CD8-positive, alpha-beta T cell (primary cell): ENCODE measurements at regions of chrX and their contacts with region 1.

Region 1: DNA sequence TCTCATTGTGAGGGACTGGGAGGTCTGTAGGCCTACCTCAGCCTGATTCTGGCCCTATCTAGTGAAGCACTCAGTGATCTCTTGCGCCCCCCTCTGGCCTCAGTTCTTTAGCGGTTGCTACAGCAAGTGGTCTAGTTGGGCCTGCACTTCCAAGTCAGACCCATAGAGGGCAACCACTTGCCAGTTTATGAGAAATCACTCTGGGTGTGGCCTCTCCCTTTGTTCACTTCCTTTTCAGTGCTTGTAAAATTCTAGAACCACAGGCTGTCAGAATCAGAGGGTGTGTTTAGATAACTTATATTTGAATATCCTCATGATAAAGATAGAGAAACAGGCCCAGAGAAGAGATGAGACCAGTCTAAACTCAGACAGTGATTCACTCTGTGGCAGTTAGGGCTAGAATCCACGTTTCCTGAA is 60.9 kb upstream of the LAS1L start:
- DNase-seq: peak; percentile 82 to 96 (median 92)
- ATAC-seq: peak; percentile 81
- H3K4me3 ChIP-seq: peak overlapping the region in 1 of 2 experiments; percentile 17
- H3K4me3 Mint-ChIP-seq: peak overlapping the region; percentile 67
- H3K27ac ChIP-seq: peak overlapping the region; percentile 64 to 90
- H3K27ac Mint-ChIP-seq: peak overlapping the region; percentile 96
- H3K4me1 ChIP-seq: peaks cover 51% of the 10 kb centered on the region
- H3K4me1 Mint-ChIP-seq: peaks cover 48% of the 10 kb centered on the region
- H3K27me3 ChIP-seq: no peaks in the 10 kb centered on the region
- H3K27me3 Mint-ChIP-seq: no peaks in the 10 kb centered on the region
- CTCF ChIP-seq: peak; percentile 82

Region 2: DNA sequence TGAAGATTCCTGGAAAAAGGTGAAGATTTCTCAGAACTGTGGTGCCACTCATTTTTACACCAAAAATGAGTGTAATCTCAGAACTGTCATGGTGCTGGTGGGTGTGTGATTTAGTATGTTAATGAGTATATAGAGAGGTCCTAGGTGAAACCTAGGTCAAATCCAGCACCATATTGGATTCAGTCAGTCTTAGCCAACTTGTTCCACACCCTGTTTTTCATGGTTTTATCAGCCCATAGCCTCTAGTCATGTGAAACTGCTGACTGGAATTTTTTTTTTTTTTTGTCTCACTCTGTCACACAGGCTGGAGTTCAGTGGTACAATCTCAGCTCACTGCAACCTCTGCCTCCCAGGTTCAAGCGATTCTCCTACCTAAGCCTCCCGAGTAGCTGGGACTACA is 118.9 kb before region 1 on chrX:
- CTCF ChIA-PET with region 1: no interaction called
- POLR2A ChIA-PET with region 1: no interaction called
- intact Hi-C with region 1: no loop called
- DNase-seq: no peak
- ATAC-seq: no peak
- H3K4me3 ChIP-seq: no peak overlapping the region
- H3K4me3 Mint-ChIP-seq: no peak overlapping the region
- H3K27ac ChIP-seq: no peak overlapping the region
- H3K27ac Mint-ChIP-seq: no peak overlapping the region
- H3K4me1 ChIP-seq: no peaks in the 10 kb centered on the region
- H3K4me1 Mint-ChIP-seq: no peaks in the 10 kb centered on the region
- H3K27me3 ChIP-seq: no peaks in the 10 kb centered on the region
- H3K27me3 Mint-ChIP-seq: no peaks in the 10 kb centered on the region
- CTCF ChIP-seq: no peak

Region 3: DNA sequence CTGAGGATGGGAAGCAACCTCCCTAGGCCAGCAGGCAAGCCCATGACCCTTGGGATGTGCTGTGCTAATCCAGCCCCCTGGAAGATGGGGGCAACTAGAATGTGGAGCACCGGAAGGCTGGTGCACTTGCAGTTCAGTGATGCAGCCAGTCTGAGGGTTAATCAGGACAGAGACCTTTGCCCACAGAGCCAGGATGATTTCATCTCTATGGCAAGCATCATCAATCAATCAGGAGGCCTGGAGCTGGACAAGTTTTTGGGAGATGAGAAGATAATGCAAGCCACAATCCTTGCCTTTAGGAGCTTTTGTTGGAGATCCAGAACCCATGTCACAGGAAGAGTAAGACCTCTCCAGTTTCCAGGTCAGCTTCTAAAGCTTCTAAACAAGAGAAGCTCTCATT is 56.6 kb after region 1 on chrX:
- CTCF ChIA-PET with region 1: interaction called, 3 read pairs
- POLR2A ChIA-PET with region 1: no interaction called
- intact Hi-C with region 1: loop called in 1 of 2 experiments (anchors 5 kb)
- DNase-seq: no peak
- ATAC-seq: no peak
- H3K4me3 ChIP-seq: no peak overlapping the region
- H3K4me3 Mint-ChIP-seq: no peak overlapping the region
- H3K27ac ChIP-seq: no peak overlapping the region
- H3K27ac Mint-ChIP-seq: no peak overlapping the region
- H3K4me1 ChIP-seq: no peaks in the 10 kb centered on the region
- H3K4me1 Mint-ChIP-seq: peaks cover 15% of the 10 kb centered on the region
- H3K27me3 ChIP-seq: no peaks in the 10 kb centered on the region
- H3K27me3 Mint-ChIP-seq: no peaks in the 10 kb centered on the region
- CTCF ChIP-seq: no peak

Region 4: GRCh38 chrX:65677954-65678469 is 82.5 kb after region 1 on chrX:
- CTCF ChIA-PET with region 1: interaction called, 11 read pairs
- POLR2A ChIA-PET with region 1: no interaction called
- intact Hi-C with region 1: no loop called
- DNase-seq: no peak
- ATAC-seq: no peak
- H3K4me3 ChIP-seq: no peak overlapping the region
- H3K4me3 Mint-ChIP-seq: peak overlapping the region; percentile 58
- H3K27ac ChIP-seq: peak overlapping the region in 1 of 2 experiments; percentile 54
- H3K27ac Mint-ChIP-seq: peak overlapping the region; percentile 77
- H3K4me1 ChIP-seq: peaks cover 85% of the 10 kb centered on the region
- H3K4me1 Mint-ChIP-seq: peaks cover 83% of the 10 kb centered on the region
- H3K27me3 ChIP-seq: no peaks in the 10 kb centered on the region
- H3K27me3 Mint-ChIP-seq: no peaks in the 10 kb centered on the region
- CTCF ChIP-seq: no peak

Region 5: GRCh38 chrX:65712005-65712806 is 116.7 kb after region 1 on chrX:
- CTCF ChIA-PET with region 1: no interaction called
- POLR2A ChIA-PET with region 1: no interaction called
- intact Hi-C with region 1: no loop called
- DNase-seq: no peak
- ATAC-seq: no peak
- H3K4me3 ChIP-seq: no peak overlapping the region
- H3K4me3 Mint-ChIP-seq: no peak overlapping the region
- H3K27ac ChIP-seq: peak overlapping the region in 1 of 2 experiments; percentile 21
- H3K27ac Mint-ChIP-seq: peak overlapping the region; percentile 55
- H3K4me1 ChIP-seq: peaks cover 63% of the 10 kb centered on the region
- H3K4me1 Mint-ChIP-seq: peaks cover 71% of the 10 kb centered on the region
- H3K27me3 ChIP-seq: no peaks in the 10 kb centered on the region
- H3K27me3 Mint-ChIP-seq: no peaks in the 10 kb centered on the region
- CTCF ChIP-seq: no peak

Region 6: DNA sequence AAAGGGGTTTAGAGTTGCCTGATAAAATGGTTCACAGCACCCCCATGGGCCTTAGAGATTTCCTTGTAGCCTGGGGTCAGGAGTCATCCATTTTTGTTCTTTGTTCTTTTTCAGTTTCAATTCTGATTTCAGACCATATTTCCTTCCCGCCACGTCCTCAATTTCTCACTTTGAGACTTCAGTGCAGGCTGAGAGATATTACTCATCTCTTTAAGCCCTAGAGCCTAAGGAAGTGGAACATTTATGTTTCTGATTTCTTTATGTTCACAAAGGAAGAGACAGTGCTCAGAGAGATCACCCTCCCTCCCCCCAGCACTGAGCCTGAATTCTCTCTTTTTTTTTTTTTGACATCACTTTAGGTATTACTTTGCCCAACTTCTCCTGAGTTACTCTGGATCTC is 128.2 kb after region 1 on chrX:
- CTCF ChIA-PET with region 1: interaction called, 4 read pairs
- POLR2A ChIA-PET with region 1: no interaction called
- intact Hi-C with region 1: loop called (anchors 1 to 2 kb)
- DNase-seq: peak in 5 of 9 experiments; percentile 13 to 81 (median 53)
- ATAC-seq: peak; percentile 68
- H3K4me3 ChIP-seq: no peak overlapping the region
- H3K4me3 Mint-ChIP-seq: peak overlapping the region; percentile 45
- H3K27ac ChIP-seq: peak overlapping the region; percentile 58 to 83
- H3K27ac Mint-ChIP-seq: peak overlapping the region; percentile 91
- H3K4me1 ChIP-seq: peaks cover 86% of the 10 kb centered on the region
- H3K4me1 Mint-ChIP-seq: peaks cover 84% of the 10 kb centered on the region
- H3K27me3 ChIP-seq: no peaks in the 10 kb centered on the region
- H3K27me3 Mint-ChIP-seq: no peaks in the 10 kb centered on the region
- CTCF ChIP-seq: no peak

Region 7: DNA sequence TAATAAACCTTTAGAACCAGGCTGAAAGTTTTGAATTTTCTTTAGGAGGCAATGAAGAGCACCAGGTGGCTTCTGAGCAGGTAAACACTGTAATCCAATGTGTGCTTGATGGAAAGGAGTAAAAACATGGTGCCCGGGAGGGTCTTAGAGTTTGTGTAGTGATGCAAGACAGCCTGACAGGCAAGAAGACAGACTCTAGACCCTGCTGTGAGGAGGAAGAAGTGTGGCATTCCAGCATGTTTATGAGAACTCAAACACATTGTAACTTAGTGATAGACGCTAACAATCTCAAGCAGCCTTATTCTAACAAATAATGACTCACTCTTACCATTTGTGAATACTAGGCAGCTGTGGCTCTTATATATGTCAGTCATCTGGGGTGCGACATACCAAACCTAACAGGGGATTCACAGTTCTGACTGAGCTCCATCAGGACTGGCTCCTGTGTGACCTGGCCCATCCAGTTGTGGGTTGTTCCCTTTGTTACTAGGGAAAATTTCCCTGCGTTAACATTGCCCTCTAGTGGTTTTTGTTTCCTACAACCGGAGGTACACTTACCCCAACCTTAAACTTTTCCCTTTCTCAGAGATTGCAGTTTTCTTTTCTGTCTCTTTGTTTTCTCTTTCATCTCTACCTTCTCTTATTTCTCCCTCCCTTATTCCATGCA is 390.6 kb after region 1 on chrX:
- CTCF ChIA-PET with region 1: interaction called, 11 read pairs
- POLR2A ChIA-PET with region 1: no interaction called
- intact Hi-C with region 1: loop called (anchors 1 to 2 kb)
- DNase-seq: peak in 8 of 9 experiments; percentile 13 to 84 (median 50)
- ATAC-seq: peak; percentile 97
- H3K4me3 ChIP-seq: no peak overlapping the region
- H3K4me3 Mint-ChIP-seq: no peak overlapping the region
- H3K27ac ChIP-seq: peak overlapping the region in 1 of 2 experiments; percentile 59
- H3K27ac Mint-ChIP-seq: peak overlapping the region; percentile 62
- H3K4me1 ChIP-seq: peaks cover 6% of the 10 kb centered on the region
- H3K4me1 Mint-ChIP-seq: peaks cover 14% of the 10 kb centered on the region
- H3K27me3 ChIP-seq: no peaks in the 10 kb centered on the region
- H3K27me3 Mint-ChIP-seq: no peaks in the 10 kb centered on the region
- CTCF ChIP-seq: peak; percentile 47